ENCODE measurements at regions of chr10 and their contacts with region 1.

Region 1: DNA sequence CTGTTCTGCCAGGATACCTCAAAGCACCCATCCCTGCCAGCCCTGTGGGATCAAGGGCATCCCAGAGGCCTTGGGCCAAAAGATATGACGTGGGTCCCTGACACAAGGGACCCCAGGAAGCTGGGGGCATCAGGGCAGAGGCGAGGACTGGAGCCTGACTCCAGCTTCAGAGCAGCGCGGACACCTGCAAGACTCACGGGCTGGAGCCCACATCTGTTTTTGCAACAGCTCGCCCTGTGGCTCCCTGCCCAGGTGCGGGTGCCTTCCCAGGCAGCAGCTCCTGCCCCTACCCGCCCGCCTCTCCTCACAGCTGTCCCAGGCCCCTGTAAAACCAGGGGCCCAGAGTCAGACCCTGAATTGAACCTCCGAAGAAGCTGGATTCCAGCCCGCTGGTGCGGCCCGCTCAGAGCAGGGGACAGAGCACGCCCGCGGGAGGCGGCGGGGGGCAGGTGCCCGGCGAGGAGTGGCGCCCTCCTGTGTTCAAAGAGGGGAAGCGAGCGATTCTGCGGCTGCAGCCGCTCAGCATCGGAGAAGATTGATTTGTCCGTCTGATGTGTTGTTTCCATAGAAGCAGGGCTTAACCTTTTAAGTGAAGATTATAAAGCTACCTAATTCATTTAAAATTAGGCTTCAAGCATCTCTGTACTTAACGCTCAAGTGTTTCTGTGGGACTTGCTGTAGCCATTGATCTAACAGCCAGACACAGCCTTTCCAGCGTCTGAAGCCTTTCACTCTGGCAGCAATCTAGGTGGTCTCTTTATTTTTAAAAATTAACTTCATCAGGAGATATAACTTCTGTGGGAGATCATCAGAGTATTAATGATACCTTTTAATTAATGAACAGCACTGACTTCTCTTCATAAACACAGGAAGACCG is 88.4 kb downstream of the BEND7 start:
- DNase-seq: peak; percentile 49
- H3K4me3 Mint-ChIP-seq: peak overlapping the region; percentile 4
- H3K27ac Mint-ChIP-seq: no peak overlapping the region
- H3K4me1 Mint-ChIP-seq: peaks cover 10% of the 10 kb centered on the region
- H3K27me3 Mint-ChIP-seq: peaks cover 41% of the 10 kb centered on the region

Region 2: DNA sequence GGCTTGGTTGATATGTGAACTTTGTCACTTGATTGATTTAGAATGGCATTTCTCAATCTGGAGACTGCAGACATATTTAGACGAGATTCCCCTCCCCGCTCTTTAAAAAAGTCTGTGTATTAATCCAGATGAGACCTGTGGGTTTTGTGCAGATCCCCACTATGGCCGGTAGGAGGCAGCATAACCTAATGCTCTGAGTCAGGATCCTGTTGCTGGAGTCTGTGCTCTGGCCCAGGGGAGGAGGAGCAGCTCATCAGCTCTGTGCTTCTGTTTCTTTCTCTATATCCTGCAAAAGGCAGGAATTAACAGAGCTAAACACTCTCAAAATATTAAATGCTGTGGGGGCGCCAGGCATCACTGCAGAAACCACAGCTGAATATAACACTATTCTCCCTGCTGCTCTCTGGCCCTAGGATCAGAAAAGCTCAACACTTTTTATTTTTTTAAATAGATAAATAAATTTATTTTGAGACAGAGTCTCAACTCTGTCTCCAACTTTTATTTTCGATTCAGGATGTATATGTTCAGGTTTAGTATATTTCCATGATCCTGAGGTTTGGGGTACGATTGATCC is 68.4 kb before region 1 on chr10:
- intact Hi-C with region 1: loop called (anchors 1 kb)
- DNase-seq: peak; percentile 61
- H3K4me3 Mint-ChIP-seq: no peak overlapping the region
- H3K27ac Mint-ChIP-seq: no peak overlapping the region
- H3K4me1 Mint-ChIP-seq: no peaks in the 10 kb centered on the region
- H3K27me3 Mint-ChIP-seq: peaks cover 3% of the 10 kb centered on the region

Region 3: GRCh38 chr10:13492493-13493175 is 52.2 kb after region 1 on chr10:
- intact Hi-C with region 1: no loop called
- DNase-seq: no peak
- H3K4me3 Mint-ChIP-seq: no peak overlapping the region
- H3K27ac Mint-ChIP-seq: no peak overlapping the region
- H3K4me1 Mint-ChIP-seq: no peaks in the 10 kb centered on the region
- H3K27me3 Mint-ChIP-seq: no peaks in the 10 kb centered on the region

Region 4: DNA sequence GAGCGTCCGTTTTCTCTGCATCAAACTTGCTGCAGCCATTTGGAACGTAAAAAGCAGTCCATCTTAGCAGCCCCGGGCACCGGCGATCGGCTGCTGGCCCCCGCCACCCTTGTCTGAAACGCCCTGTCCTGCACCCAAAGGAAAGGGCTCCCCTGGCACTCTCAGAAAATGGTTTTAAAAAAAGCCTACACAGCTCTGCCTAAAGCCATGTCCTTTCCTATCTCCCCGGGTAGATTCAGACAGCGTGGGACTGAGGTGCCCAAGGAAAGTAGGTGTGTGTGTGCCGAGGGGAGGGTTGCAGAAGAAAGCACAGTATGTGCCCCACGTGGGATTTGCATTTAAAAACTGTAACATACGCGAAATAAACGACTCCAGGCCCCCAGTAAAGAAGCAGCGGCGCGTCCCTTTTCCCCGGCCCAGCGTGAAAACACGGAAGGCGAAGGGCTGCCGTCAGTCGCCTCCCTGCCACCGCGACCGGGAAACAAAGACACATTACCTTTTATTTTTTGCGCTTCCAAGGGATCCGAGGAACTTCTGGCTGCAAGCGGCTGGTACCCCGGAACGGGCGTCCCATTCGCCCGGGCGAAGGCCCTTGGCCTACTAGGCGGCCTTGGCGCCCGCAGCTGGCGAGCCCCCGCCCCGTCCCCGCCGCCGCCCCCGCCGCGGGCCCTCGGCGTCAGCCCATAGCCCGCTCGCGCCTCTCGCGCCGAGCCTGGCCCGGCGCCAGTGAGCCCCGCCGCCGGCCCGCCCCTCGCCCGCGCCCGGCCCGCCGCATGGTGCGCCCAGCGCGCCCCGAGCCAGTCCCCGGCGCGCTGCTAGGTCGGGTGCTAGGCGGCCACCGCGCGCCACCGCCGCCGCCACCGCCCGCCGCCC is 450.9 kb after region 1 on chr10:
- intact Hi-C with region 1: no loop called
- DNase-seq: no peak
- H3K4me3 Mint-ChIP-seq: no peak overlapping the region
- H3K27ac Mint-ChIP-seq: no peak overlapping the region
- H3K4me1 Mint-ChIP-seq: peaks cover 2% of the 10 kb centered on the region
- H3K27me3 Mint-ChIP-seq: peaks cover 66% of the 10 kb centered on the region

Measured in activated T-helper 2 cell treated with anti-CD3 and anti-CD28 coated beads, Interferon-gamma antibody, Interleukin-2, Interleukin-4, amounts not matched to agents 10 μg/mL and 5 μg/mL and 100 μg/mL, durations not matched to agents 14 hours and 24 hours and 36 hours (primary cell).